Right ventricle myocardium inferior (tissue), 1 donor: ENCODE measurements at regions of chr9 and their contacts with region 1.

Region 1: GRCh38 chr9:130626249-130626992 is 38.0 kb upstream of the PRDM12 start:
- DNase-seq: peak; percentile 64
- ATAC-seq: no peak

Region 2: DNA sequence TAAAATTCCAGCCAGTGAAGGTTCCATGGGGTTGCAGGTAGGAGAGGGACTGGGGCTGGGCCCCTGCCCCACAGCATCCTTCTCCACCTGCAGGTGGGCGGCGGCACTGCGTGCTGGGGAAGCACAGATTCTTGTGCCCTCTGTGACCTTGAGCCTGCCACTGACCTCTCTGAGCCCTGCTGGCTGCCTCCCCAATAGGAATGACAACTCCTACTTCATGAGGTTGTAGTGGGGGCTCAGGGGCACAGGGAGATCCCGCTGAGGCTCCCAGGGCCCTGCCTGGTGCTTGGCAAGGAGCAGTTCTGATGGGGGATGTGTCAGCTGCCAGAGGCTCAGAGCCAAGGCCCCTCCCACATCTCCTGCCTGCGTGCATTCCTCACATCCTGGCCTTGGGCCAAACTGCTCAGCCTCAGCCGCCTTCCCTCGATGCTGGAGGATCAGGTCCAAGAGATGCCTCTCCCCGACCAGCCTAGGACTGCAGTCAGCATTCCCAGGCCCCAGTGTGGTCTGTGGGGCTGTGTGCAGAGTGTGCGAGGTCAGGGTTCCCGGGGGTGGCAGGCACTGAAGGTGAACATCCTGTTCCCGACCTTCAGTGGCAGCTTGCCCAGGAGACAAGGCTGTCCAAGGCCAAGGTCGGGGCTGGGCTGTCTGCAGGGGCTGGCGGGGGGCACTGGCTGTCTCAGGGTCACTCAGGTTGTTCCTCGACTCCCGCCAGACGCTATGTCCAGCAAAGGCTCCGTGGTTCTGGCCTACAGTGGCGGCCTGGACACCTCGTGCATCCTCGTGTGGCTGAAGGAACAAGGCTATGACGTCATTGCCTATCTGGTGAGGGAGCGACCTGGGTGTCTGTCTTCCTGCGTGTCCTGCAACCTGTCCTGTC is 174.7 kb before region 1 on chr9:
- intact Hi-C with region 1: loop called (anchors 5 kb)
- DNase-seq: peak; percentile 87
- ATAC-seq: peak; percentile 75

Region 3: GRCh38 chr9:130578865-130579737 is 47.3 kb before region 1 on chr9 and contains the start of gene FUBP3:
- intact Hi-C with region 1: loop called (anchors 5 kb)
- DNase-seq: peak; percentile 97
- ATAC-seq: peak; percentile 95
- total RNA-seq, gene FUBP3: 21.9 TPM